Adrenal gland (tissue), 19 donors: ENCODE measurements at regions of chr1 and their contacts with region 1.

Region 1: GRCh38 chr1:40625066-40625465 is 40.4 kb downstream of the RIMS3 start:
- DNase-seq: peak; percentile 55 to 78 (median 67)
- H3K4me3 ChIP-seq: no peak overlapping the region
- H3K27ac ChIP-seq: no peak overlapping the region
- H3K4me1 ChIP-seq: no peaks in the 10 kb centered on the region
- H3K27me3 ChIP-seq: no peaks in the 10 kb centered on the region
- CTCF ChIP-seq: peak; percentile 22 to 50 (median 49)
- POLR2A ChIP-seq: no peak

Region 2: GRCh38 chr1:40553017-40553416 is 72.0 kb before region 1 on chr1:
- intact Hi-C with region 1: no loop called
- DNase-seq: no peak
- H3K4me3 ChIP-seq: no peak overlapping the region
- H3K27ac ChIP-seq: no peak overlapping the region
- H3K4me1 ChIP-seq: no peaks in the 10 kb centered on the region
- H3K27me3 ChIP-seq: no peaks in the 10 kb centered on the region
- CTCF ChIP-seq: no peak
- POLR2A ChIP-seq: no peak

Region 3: GRCh38 chr1:40668769-40669525 is 43.9 kb after region 1 on chr1:
- intact Hi-C with region 1: loop called in 1 of 2 experiments (anchors 5 kb)
- DNase-seq: peak; percentile 67 to 92 (median 80)
- H3K4me3 ChIP-seq: peak overlapping the region in 1 of 4 donors; percentile 35
- H3K27ac ChIP-seq: no peak overlapping the region
- H3K4me1 ChIP-seq: peaks cover 10 to 15% of the 10 kb centered on the region in 2 donors
- H3K27me3 ChIP-seq: no peaks in the 10 kb centered on the region
- CTCF ChIP-seq: peak; percentile 78 to 97 (median 90)
- POLR2A ChIP-seq: no peak

Region 4: DNA sequence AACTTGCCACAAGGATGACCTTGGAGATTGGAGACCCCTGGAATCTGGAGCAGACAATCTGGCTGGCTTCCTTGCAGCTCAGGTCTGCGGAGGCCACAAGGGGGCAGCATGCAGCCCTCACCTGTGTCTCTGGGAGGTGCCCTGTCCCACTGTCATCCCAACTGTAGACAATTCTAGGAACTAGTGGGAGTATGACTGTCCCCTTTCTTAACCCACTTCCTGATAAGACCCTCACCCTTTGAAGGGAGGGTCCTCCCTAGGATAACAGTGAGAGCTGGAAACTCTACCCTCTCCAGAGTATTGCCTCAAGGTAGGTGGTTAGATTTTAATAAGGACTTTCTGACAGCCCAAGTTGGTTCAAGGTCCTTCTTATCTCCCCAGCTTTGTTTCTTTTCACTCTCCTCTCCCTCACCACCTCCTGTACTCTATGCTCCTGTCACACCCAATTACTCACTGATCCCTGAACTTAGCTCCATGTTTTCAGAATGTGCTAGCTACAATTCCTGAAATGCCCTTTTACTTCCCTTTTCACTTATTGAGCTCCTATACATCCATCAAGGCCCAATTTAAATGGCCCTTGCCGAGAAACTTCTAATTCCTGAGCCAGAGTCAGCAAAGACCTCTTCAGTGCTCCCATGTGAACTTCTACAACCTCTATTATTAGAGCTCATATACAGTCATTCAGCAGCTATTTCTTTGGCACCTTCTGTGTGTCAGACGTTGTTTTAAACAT is 149.4 kb after region 1 on chr1:
- intact Hi-C with region 1: loop called in 1 of 2 experiments (anchors 10 kb)
- DNase-seq: peak in 6 of 7 donors; percentile 41 to 75 (median 54)
- H3K4me3 ChIP-seq: no peak overlapping the region
- H3K27ac ChIP-seq: no peak overlapping the region
- H3K4me1 ChIP-seq: no peaks in the 10 kb centered on the region
- H3K27me3 ChIP-seq: no peaks in the 10 kb centered on the region
- CTCF ChIP-seq: peak; percentile 45 to 74 (median 58)
- POLR2A ChIP-seq: no peak